Activated T-helper 2 cell treated with anti-CD3 and anti-CD28 coated beads, Interferon-gamma antibody, Interleukin-2, Interleukin-4, amounts not matched to agents 10 μg/mL and 5 μg/mL and 100 μg/mL, durations not matched to agents 14 hours and 24 hours and 36 hours (primary cell): ENCODE measurements at regions of chr5 and their contacts with region 1.

Region 1: DNA sequence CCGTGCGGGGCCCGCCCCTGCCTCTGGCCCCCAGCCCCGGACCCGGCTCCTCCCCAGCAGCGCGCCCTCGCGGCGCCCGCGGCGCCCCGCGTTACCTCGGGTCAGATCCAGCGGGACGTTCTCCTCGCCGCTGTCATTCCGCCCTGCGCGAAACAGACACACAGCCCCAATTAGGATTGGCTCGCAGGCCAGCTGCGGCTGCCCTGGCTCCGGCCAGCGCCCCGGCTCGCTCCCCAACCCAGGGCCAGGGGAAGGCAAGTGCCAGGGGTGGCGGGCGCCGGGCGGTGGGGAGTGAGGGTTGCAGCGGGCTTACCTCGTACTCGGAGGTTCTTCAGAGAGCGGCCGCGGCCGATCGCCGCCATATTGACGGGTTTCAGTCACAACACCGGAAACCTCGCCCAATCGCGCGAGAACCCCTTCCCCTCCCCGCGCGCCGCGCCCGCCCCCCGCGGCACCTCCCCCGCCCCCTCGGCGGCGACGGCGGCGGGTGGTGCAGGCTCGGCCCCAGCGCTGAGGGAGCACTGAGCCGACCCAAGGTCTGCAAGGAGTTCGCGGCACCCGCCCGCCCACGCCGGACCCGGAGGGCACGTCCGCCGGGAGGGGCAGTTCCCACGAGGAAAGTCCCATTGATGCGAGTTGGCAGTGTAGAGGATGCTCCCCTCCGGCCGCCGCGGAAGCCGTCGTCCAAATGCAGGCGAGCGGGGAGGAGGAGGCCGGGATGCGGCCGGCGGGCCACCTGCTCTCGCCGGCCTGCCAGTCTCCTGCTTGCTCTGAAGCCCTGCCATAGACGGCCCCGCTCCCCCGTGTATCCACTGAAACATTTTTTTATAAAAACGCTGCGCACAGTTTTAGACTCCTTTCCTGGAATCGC is at the start of gene RICTOR:
- DNase-seq: peak; percentile 87
- H3K4me3 Mint-ChIP-seq: peak within 1 kb of the TSS; percentile 95
- H3K27ac Mint-ChIP-seq: peak within 1 kb of the TSS; percentile 97
- H3K4me1 Mint-ChIP-seq: peaks cover 46% of the 10 kb centered on the region
- H3K27me3 Mint-ChIP-seq: peaks cover 12% of the 10 kb centered on the region
- total RNA-seq, gene RICTOR: 28.2 and 29.8 TPM in 2 replicates

Region 2: DNA sequence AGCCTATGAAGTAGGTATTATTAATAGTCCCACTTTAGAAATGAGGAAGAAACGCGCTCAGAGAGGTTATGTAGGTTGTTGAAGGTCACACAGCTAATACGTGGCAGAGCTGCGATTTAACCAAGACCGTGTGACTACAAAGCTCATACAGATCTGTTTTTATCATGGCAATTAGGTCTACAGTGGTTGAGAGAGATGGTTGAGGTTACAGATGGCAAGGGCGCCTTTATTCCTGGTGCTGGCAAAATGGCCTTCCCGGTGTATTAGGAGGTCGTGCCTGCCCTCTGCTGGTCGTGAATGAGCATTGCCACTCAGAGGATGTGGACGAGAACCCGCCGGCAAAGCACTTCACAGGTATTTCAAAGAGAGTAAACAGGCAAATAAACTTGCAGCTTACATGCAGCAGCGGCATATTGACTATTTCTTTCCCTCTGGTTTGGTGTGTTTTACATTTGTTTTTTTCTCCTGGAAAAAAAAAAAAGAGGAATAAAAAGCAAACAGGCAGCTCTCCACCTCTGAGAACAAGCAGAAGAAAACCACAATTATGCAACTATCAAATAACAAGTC is 881.2 kb before region 1 on chr5:
- intact Hi-C with region 1: no loop called
- DNase-seq: peak; percentile 37
- H3K4me3 Mint-ChIP-seq: no peak overlapping the region
- H3K27ac Mint-ChIP-seq: no peak overlapping the region
- H3K4me1 Mint-ChIP-seq: no peaks in the 10 kb centered on the region
- H3K27me3 Mint-ChIP-seq: peaks cover 18% of the 10 kb centered on the region

Region 3: GRCh38 chr5:38556599-38557305 is 517.5 kb before region 1 on chr5 and contains the start of gene LIFR:
- intact Hi-C with region 1: loop called (anchors 10 kb)
- DNase-seq: peak; percentile 37
- H3K4me3 Mint-ChIP-seq: peak within 1 kb of the TSS; percentile 83
- H3K27ac Mint-ChIP-seq: no peak within 1 kb of the TSS
- H3K4me1 Mint-ChIP-seq: peaks cover 11% of the 10 kb centered on the region
- H3K27me3 Mint-ChIP-seq: peaks cover 67% of the 10 kb centered on the region
- total RNA-seq, gene LIFR: 0.25 TPM in 1 of 2 replicates, not detected in the other

Region 4: GRCh38 chr5:38845526-38846378 is 228.5 kb before region 1 on chr5 and contains the start of gene OSMR:
- intact Hi-C with region 1: loop called (anchors 10 kb)
- DNase-seq: no peak
- H3K4me3 Mint-ChIP-seq: peak within 1 kb of the TSS; percentile 79
- H3K27ac Mint-ChIP-seq: no peak within 1 kb of the TSS
- H3K4me1 Mint-ChIP-seq: peaks cover 4% of the 10 kb centered on the region
- H3K27me3 Mint-ChIP-seq: peaks cover 60% of the 10 kb centered on the region
- total RNA-seq, gene OSMR: 0.07 TPM in 1 of 2 replicates, not detected in the other

Region 5: GRCh38 chr5:38948501-38948900 is 125.8 kb before region 1 on chr5:
- intact Hi-C with region 1: no loop called
- DNase-seq: no peak
- H3K4me3 Mint-ChIP-seq: no peak overlapping the region
- H3K27ac Mint-ChIP-seq: no peak overlapping the region
- H3K4me1 Mint-ChIP-seq: peaks cover 4% of the 10 kb centered on the region
- H3K27me3 Mint-ChIP-seq: no peaks in the 10 kb centered on the region

Region 6: DNA sequence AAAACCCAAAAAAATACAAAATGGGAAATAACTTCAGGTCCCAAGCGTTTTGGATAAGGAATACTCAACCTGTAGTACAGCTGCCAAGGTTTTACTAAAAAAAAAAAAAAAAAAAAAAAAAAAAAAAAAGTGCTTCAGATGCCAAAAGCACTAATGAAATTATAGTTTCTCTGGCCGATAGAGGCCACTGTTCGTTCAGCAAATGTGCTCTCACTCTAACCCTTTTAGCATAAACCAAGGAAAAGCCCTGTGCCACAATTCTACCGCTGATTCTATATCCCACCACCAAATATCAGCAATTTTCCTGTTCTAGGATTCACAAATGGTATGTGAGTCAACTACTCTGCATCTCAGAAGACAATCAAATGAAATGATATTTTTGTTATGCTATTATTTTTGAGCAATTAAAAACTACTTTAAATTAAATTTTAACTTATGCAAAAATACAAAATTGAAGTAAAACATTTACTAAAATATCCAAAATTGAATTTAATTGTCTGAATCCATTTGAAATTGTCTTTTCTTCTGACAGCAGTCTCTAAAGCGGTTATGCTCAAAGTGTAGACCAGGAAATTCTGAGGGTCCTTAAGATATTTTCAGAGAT is 79.8 kb before region 1 on chr5:
- intact Hi-C with region 1: loop called (anchors 5 kb)
- DNase-seq: no peak
- H3K4me3 Mint-ChIP-seq: no peak overlapping the region
- H3K27ac Mint-ChIP-seq: no peak overlapping the region
- H3K4me1 Mint-ChIP-seq: peaks cover 7% of the 10 kb centered on the region
- H3K27me3 Mint-ChIP-seq: no peaks in the 10 kb centered on the region

Region 7: DNA sequence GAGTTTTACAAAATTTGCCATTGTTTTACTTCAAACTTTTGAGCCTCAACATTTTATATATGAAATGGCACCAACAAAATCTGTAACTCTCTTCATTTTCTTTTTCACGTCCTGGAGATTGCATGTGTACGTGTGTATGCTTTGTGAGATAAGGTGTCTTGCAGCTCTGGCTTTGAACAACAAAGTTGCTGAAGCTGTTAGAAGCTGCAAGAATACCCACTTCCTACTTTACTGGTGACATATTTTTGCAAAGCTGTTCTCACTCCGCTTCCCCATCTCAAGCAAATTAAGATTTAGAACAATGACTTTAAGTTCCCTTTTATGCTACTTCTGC is 103.3 kb after region 1 on chr5:
- intact Hi-C with region 1: loop called (anchors 5 kb)
- DNase-seq: no peak
- H3K4me3 Mint-ChIP-seq: peak overlapping the region; percentile 69
- H3K27ac Mint-ChIP-seq: peak overlapping the region; percentile 84
- H3K4me1 Mint-ChIP-seq: peaks cover 85% of the 10 kb centered on the region
- H3K27me3 Mint-ChIP-seq: no peaks in the 10 kb centered on the region

Region 8: DNA sequence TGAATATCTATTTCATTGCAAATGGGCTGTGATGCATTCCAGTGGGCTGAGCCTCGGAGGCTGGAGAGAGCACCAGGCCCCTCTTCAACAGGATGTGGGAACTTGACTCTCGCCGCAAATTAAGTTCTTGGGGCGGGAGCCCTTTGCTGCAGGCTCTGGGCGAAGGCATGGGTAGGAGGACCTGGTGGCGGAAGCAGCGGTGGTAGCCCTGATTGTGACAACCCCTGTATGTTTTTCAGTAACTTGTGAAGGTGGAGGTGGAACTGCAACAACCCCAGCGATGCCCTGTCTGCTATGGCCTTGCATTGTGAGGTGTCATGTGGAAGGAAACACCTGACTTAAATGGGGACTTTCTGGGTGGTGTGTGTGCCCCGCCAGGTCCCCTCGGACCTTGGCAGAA is 135.7 kb after region 1 on chr5:
- intact Hi-C with region 1: loop called (anchors 2 kb)
- DNase-seq: peak; percentile 82
- H3K4me3 Mint-ChIP-seq: peak overlapping the region; percentile 73
- H3K27ac Mint-ChIP-seq: peak overlapping the region; percentile 90
- H3K4me1 Mint-ChIP-seq: peaks cover 87% of the 10 kb centered on the region
- H3K27me3 Mint-ChIP-seq: no peaks in the 10 kb centered on the region